ENCODE measurements at regions of chr16 and their contacts with region 1.

Region 1: DNA sequence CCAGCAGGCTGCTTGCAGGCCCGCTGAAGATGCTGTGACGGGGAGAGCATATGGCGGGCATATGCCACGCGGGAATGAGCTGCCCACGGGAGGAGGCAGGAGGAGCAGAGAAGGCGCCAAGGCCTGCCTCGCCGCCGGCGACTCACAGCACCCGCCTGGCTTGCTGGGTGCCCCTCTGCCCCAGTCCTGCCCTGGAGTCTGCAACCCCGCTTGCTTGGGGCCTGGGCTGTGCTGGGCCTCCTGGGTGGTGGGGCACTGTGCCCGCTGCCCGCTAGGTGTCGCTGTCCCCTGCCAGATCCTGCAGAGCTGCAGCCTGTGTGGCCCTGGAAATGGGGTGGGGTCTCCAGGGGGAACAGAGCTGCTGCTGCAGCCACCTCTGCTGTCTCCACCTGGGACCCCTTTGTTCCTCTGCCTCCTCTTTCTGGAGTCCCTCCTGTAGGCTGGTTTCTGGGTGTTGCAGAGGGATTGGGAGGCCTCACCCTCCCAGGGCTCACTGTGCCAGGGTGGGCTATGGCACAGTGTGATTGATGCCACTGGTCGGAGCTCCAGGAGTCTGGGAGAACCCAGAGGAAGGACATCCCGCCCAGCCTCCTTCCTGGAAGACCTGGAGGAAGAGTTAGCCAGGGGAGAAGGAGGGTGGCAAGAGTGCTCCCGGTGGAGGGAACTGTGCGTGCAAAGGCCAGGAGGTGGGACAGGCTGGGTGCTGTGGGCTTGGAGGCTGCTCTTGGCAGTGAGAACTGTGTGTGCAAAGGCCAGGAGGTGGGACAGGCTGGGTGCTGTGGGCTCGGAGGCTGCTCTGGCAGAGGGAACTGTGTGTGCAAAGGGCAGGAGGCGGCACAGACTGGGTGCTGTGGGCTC is 141.0 kb upstream of the CIBAR2 start:
- DNase-seq: no peak
- H3K4me3 ChIP-seq: no peak overlapping the region
- H3K27me3 ChIP-seq: no peaks in the 10 kb centered on the region
- CTCF ChIP-seq: peak; percentile 97

Region 2: DNA sequence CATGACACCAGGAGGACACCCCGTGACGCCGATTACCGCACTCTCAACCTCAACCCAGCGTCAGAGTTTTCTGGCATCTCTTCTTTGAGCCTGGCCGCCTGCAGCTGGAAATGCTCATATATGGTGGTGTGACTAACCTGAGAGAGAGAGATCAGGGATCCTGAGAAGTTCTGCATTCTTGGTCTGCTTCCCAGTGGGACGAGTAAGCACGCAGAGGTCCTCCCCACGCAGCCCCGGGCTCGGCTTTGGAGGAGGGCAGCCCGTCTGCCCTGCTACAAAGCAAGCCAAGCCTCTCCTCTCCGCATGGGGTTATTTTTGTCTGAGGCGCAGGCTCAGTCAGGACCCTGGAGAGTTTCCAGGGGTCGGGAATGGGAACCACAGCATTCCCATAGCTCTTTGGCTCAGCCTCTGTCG is 417.1 kb before region 1 on chr16:
- CTCF ChIA-PET with region 1: no interaction called
- POLR2A ChIA-PET with region 1: no interaction called
- DNase-seq: peak; percentile 100
- H3K4me3 ChIP-seq: no peak overlapping the region
- H3K27me3 ChIP-seq: no peaks in the 10 kb centered on the region
- CTCF ChIP-seq: no peak

Region 3: DNA sequence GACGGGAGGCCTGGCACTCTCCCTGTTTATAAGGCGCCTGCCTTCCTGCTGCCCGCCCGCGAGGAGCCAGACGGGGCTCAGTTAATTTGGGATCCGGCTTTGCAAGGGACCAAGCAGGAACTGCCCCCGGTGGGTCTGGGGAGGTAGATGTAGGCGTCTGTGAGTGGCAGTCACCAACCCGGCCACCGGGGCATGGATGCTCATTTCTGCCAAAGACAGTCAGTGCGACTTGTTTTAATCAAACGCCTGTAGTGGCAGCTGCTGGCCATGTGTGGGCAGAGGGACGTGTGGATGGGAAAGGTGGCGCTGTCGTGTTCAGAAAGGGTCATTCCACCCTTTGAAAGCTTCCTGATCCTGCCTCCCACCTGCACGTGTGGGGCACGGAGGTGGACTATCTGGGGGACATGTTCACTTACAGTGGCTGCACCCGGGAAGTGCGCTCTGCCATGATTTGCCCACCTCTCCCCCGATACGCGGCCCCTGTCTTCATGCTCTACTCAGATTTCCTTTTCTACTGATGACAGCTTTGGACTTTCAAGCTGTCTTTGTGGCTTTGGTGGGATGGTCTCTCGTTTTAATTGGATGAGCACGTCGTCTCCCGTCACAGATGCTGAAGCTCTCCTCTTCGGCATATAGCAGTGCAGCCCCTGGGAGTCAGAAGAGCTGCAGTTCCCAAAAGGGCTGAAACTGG is 80.7 kb before region 1 on chr16:
- CTCF ChIA-PET with region 1: interaction called, 13 read pairs
- POLR2A ChIA-PET with region 1: no interaction called
- DNase-seq: no peak
- H3K4me3 ChIP-seq: peak overlapping the region; percentile 48
- H3K27me3 ChIP-seq: no peaks in the 10 kb centered on the region
- CTCF ChIP-seq: peak; percentile 29

Region 4: GRCh38 chr16:85234310-85235204 is 18.8 kb before region 1 on chr16:
- CTCF ChIA-PET with region 1: interaction called, 10 read pairs
- POLR2A ChIA-PET with region 1: interaction called, 3 read pairs
- DNase-seq: no peak
- H3K4me3 ChIP-seq: peak overlapping the region; percentile 41
- H3K27me3 ChIP-seq: no peaks in the 10 kb centered on the region
- CTCF ChIP-seq: 0 out of 2 replicates have a peak, but pooled peaks have one; percentile 9

Region 5: GRCh38 chr16:85266857-85267256 is 13.5 kb after region 1 on chr16:
- CTCF ChIA-PET with region 1: interaction called, 40 read pairs
- POLR2A ChIA-PET with region 1: no interaction called
- DNase-seq: no peak
- H3K4me3 ChIP-seq: no peak overlapping the region
- H3K27me3 ChIP-seq: no peaks in the 10 kb centered on the region
- CTCF ChIP-seq: no peak

Region 6: DNA sequence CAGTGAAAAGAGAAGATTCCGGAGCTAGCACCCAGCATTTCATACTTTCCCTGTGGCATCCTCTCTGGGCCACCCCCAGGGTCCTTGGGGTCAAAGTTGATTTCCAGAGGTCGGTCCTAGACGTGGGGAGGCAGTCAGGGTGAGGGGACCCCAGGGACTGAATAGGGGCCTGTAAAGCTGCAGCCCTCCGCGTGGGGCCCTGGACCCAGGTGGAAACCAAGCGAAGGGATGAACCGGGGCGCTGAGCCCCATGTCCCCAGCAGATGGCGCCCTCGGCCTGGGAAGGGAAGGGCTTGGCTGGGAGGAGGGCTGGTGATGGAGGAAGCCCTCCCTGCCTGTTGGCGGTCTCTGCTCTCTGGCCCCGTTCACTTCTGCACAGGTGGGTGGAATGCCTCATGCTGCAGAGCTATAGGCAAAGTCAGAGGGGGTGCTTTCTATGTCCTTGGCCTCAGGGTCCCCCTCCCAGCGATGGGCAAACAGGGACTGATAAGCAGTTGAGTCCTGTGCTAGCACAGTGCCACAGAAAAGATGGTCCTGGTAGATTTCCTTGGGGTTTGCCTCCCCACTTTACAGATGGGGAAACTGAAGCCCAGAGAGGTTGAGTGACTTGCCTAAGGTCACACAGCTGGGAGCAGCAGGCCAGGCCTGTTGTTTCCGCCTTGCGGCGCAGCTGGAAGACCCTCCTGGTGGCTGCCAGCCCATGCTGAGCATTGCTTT is 22.4 kb after region 1 on chr16:
- CTCF ChIA-PET with region 1: interaction called, 17 read pairs
- POLR2A ChIA-PET with region 1: no interaction called
- DNase-seq: no peak
- H3K4me3 ChIP-seq: no peak overlapping the region
- H3K27me3 ChIP-seq: no peaks in the 10 kb centered on the region
- CTCF ChIP-seq: peak; percentile 96

Measured in BJ (cell line).